ENCODE measurements at regions of chr22 and their contacts with region 1.

Region 1: DNA sequence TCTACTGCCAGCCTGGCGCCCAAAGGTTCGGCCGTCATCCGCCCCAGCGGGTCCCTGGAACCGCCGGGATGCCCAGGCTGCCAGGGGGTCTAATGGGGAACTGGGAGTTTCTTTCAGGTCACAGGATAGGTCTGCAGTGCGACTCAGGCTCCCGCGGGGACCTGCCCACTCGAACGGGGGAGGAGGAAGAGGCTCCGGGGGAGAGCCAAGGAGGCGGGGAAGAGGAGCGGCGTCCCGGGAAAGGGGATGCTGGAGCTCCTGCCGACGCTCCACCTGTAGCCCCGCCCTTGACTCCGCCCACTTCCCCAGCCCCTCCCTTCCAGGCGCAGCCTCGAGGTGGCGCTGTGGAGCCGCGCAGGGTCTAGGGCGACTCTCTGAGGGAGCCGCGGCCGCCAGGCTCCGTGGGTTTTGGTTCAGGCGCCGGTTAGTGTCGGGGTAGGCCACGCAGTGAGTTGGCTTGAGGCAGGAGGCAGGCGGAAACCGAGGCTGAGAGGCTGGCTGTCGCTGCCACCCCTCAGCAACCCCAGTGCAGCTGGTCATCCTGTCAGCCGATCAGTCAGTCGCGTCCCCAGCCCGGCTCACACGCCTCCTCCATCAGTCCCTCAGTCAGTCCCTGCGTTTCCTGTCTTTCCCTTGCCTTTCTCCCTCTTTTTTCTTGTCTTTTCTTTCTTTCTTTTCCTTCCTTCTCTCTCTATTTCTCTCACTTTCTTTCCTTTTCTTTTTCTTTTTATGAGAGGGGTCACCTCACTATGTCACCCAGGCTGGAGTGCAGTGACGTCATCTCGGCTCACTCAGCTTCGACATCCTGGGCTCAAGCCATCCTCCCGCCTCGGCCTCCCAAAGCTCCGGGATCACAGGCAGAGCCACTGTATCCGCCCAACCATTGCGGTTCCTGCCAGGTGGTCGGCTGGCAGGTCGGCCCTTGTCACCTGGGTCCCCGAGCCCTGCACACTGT is 26.4 kb downstream of the YWHAH start:
- DNase-seq: peak; percentile 93 to 95
- ATAC-seq: peak; percentile 98 to 99 (median 99)
- H3K4me3 ChIP-seq: peak overlapping the region; percentile 39
- H3K4me3 Mint-ChIP-seq: peak overlapping the region; percentile 81
- H3K27ac ChIP-seq: peak overlapping the region; percentile 38
- H3K27ac Mint-ChIP-seq: peak overlapping the region; percentile 26 to 45
- H3K4me1 ChIP-seq: peaks cover 16% of the 10 kb centered on the region
- H3K4me1 Mint-ChIP-seq: peaks cover 14 to 17% of the 10 kb centered on the region in 2 donors
- H3K27me3 ChIP-seq: no peaks in the 10 kb centered on the region
- H3K27me3 Mint-ChIP-seq: no peaks in the 10 kb centered on the region
- CTCF ChIP-seq: peak; percentile 96

Region 2: DNA sequence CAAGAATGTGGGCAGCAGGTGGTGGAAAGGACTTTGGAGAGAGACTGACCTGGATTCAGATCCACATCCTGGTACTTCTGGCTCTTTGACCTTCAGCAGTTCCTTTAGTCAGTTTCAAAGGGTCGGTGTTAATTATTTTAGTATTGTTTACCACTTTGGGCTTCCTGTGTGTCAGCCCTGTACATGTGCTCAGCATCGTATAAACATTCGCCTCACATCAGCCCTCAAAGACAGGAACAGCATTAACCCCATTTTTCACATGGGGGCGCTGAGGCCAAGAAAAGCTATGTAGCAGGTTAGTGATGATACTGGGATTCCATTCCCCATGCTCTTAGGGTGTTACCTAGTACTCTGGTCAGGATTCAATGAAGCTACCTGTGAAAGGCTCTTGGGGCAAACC is 98.6 kb before region 1 on chr22:
- intact Hi-C with region 1: no loop called
- DNase-seq: peak in 1 of 2 donors; percentile 40
- ATAC-seq: peak in 2 of 3 donors; percentile 37 to 55
- H3K4me3 ChIP-seq: no peak overlapping the region
- H3K4me3 Mint-ChIP-seq: no peak overlapping the region
- H3K27ac ChIP-seq: no peak overlapping the region
- H3K27ac Mint-ChIP-seq: peak overlapping the region in 1 of 2 donors; percentile 48
- H3K4me1 ChIP-seq: peaks cover 50% of the 10 kb centered on the region
- H3K4me1 Mint-ChIP-seq: peaks cover 26 to 37% of the 10 kb centered on the region in 2 donors
- H3K27me3 ChIP-seq: no peaks in the 10 kb centered on the region
- H3K27me3 Mint-ChIP-seq: no peaks in the 10 kb centered on the region
- CTCF ChIP-seq: no peak

Region 3: DNA sequence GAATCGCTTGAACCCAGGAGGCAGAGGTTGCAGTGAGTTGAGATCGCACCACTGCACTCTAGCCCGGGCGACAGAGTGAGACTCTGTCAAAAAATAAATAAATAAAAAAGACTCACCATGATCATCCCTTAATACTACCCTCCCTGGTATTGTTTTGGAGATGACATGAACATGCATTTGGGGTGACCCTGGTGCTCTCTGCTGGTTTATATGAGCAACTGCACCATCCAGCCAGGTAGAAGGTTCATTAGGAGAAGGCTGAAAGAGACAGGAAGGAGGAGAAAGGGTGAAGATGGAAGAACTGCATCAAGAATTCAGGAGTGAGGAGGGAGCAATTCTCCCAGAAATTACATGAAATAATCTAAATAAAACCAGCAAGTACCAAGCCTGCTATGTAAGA is 110.1 kb after region 1 on chr22:
- intact Hi-C with region 1: loop called (anchors 2 kb)
- DNase-seq: peak in 1 of 2 donors; percentile 66
- ATAC-seq: peak in 1 of 3 donors; percentile 50
- H3K4me3 ChIP-seq: no peak overlapping the region
- H3K4me3 Mint-ChIP-seq: no peak overlapping the region
- H3K27ac ChIP-seq: no peak overlapping the region
- H3K27ac Mint-ChIP-seq: no peak overlapping the region
- H3K4me1 ChIP-seq: no peaks in the 10 kb centered on the region
- H3K4me1 Mint-ChIP-seq: no peaks in the 10 kb centered on the region
- H3K27me3 ChIP-seq: no peaks in the 10 kb centered on the region
- H3K27me3 Mint-ChIP-seq: peaks cover 8 to 16% of the 10 kb centered on the region in 2 donors
- CTCF ChIP-seq: peak; percentile 36

Region 4: GRCh38 chr22:32265882-32266767 is 295.4 kb after region 1 on chr22:
- intact Hi-C with region 1: loop called (anchors 2 kb)
- DNase-seq: peak; percentile 39 to 82
- ATAC-seq: peak; percentile 54 to 81 (median 60)
- H3K4me3 ChIP-seq: no peak overlapping the region
- H3K4me3 Mint-ChIP-seq: no peak overlapping the region
- H3K27ac ChIP-seq: no peak overlapping the region
- H3K27ac Mint-ChIP-seq: no peak overlapping the region
- H3K4me1 ChIP-seq: peaks cover 3% of the 10 kb centered on the region
- H3K4me1 Mint-ChIP-seq: peaks cover 6 to 8% of the 10 kb centered on the region in 2 donors
- H3K27me3 ChIP-seq: no peaks in the 10 kb centered on the region
- H3K27me3 Mint-ChIP-seq: peaks cover 0 to 6% of the 10 kb centered on the region in 2 donors
- CTCF ChIP-seq: peak; percentile 87

Measured in natural killer cell (primary cell).